ENCODE measurements at regions of chr20 and their contacts with region 1.

Region 1: GRCh38 chr20:34111702-34112599 is at the start of gene EIF2S2:
- DNase-seq: peak; percentile 98
- ATAC-seq: peak; percentile 91
- H3K4me3 Mint-ChIP-seq: peak within 1 kb of the TSS; percentile 95
- H3K27ac Mint-ChIP-seq: peak within 1 kb of the TSS; percentile 98
- H3K4me1 Mint-ChIP-seq: peaks cover 42% of the 10 kb centered on the region
- H3K27me3 Mint-ChIP-seq: no peaks in the 10 kb centered on the region
- total RNA-seq, gene EIF2S2: 87.7 to 106 TPM

Region 2: DNA sequence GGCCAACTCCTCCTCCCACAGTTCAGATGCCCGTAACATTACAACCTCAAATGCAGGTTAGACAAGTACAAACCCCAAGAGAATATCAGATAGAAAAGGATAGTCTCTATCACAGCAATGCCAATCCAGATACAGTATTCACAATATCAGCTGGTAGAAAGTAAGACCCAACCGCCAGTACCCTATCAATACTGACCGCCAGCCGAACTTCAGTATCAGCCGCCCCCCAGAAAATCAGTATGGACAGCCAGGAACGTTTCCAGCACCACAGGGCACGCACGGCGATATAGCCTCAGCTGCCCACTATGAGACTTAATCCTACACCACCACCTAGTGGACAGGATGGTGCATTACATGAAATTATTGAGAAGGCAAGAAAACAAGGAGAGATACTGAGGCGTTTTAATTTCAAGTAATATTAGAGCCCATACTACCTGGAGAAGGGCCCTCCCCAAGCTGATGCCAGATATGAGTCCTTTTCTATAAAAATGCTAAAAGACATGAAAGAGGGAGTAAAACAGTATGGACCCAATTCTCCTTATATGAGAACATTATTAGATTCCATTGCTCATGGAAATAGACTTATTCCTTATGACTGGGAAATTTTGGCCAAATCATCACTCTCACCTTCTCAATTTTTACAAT is 17.7 kb after region 1 on chr20:
- CTCF ChIA-PET with region 1: interaction called, 15 read pairs
- DNase-seq: peak; percentile 67
- ATAC-seq: peak; percentile 96
- H3K4me3 Mint-ChIP-seq: no peak overlapping the region
- H3K27ac Mint-ChIP-seq: no peak overlapping the region
- H3K4me1 Mint-ChIP-seq: peaks cover 11% of the 10 kb centered on the region
- H3K27me3 Mint-ChIP-seq: peaks cover 40% of the 10 kb centered on the region